Caki2 (cell line): ENCODE measurements at regions of chr6 and their contacts with region 1.

Region 1: GRCh38 chr6:144482142-144482541 is 197.0 kb downstream of the UTRN start:
- DNase-seq: peak; percentile 51

Region 2: DNA sequence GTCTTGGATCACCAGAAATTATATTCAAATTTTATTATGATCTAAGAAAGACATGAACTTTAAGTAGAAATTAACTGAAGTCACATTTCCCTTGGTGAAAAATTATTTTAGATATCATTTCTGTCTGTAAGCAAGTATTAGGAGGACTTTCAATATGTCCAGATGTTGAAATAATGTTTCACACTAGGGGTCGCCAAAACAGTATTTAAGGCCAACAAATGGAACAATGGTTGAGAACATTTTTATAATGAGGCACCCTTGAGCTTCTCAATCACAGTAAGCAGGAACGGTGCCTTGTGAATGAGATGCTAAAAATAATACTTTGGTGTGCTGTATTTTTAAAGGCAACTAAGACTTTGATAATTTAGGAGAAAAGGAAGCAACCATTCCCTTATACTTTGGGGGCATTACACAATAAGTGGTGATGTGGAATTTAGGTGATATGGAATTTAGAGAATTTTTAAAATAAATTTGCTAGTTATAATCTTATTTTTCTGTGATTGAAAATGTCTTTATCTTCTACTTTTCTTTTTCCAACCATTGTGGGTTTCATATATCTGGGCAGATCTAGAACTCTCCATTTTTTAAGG is 377.1 kb before region 1 on chr6:
- in situ Hi-C with region 1: loop called (anchors 25 kb)
- DNase-seq: peak; percentile 42